Dendritic cell treated with granulocyte-macrophage colony-stimulating factor and Interleukin-4, amounts not matched to agents 40 ng/mL and 50 ng/mL, for 4 days (primary cell): ENCODE measurements at regions of chr12 and their contacts with region 1.

Region 1: DNA sequence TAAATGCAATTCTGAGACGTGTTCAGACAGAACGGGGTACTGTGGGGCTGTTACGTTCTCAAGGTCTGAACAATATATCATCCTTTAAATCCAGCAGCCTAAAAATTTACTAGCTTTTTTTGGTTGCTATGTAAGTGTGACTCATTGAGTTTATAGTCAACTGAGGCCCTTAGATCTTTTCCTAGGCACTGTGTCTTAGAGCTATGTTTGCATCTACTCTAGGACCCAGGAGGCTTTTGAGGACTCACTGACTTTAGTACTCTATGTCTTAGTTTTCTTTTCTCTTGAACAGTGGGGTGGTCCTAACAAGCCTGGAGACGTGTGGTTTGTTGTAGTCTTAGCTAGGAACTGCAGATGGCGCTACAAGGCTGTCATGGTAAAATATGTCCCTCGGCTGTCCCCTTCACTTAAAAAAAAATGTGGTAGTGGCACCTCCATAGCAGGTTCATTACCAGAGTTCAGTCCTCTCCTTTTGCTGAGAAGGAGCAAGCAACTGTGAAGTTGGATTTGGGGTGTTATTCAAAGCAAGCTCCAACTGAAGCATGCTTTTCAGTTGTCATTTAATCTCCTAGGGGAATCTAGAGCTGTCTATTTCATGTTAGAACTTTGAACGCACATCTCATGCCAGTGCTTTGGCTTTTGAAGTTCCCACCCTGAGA is 8.7 kb upstream of the SPATS2 start:
- H3K4me3 Mint-ChIP-seq: no peak overlapping the region
- H3K27ac Mint-ChIP-seq: no peak overlapping the region
- H3K4me1 Mint-ChIP-seq: peaks cover 11% of the 10 kb centered on the region
- H3K27me3 Mint-ChIP-seq: peaks cover 30% of the 10 kb centered on the region

Region 2: GRCh38 chr12:49515266-49515665 is 156.7 kb after region 1 on chr12:
- intact Hi-C with region 1: loop called (anchors 1 kb)
- H3K4me3 Mint-ChIP-seq: no peak overlapping the region
- H3K27ac Mint-ChIP-seq: no peak overlapping the region
- H3K4me1 Mint-ChIP-seq: peaks cover 17% of the 10 kb centered on the region
- H3K27me3 Mint-ChIP-seq: no peaks in the 10 kb centered on the region

Region 3: GRCh38 chr12:49580572-49581535 is 222.2 kb after region 1 on chr12:
- intact Hi-C with region 1: loop called (anchors 2 kb)
- H3K4me3 Mint-ChIP-seq: no peak overlapping the region
- H3K27ac Mint-ChIP-seq: no peak overlapping the region
- H3K4me1 Mint-ChIP-seq: peaks cover 9% of the 10 kb centered on the region
- H3K27me3 Mint-ChIP-seq: no peaks in the 10 kb centered on the region